ENCODE measurements at regions of chr12 and their contacts with region 1.

Region 1: DNA sequence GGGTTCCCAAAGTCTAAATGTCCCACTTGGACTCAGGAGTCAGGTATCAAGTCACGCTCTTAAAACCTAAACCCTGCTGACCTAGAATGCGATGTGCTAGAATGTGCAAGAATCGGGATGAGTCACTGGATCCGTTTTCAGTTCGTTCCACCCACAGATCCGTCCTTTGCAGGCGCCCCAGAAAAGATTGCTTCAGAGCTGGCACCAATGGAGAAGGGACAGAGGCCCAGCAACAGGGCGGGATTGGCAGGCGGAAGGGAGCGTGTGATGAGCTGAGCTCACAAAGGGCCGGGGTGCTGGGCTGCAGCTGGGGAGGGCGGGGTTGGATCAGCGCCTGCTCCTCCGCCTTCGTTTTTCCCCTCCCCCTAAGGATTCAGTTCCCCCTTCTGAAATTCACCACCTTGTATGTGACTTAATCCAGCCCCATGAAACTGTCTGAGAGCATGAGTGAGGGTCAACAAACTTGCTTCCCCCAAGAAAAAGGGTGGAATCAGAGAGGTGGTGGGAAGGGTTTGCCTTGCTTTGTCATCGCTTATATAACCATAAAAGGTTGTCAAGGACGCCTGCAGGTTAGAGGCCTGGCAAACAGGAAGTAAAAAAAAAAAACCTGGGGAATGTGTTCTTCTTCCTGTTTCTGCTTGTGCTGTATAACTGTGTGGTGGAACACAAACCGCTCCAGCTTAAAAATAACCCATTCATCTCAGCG is 2.8 kb upstream of the UBC start:
- DNase-seq: peak; percentile 99
- H3K4me3 ChIP-seq: peak overlapping the region; percentile 22; the same call in 1 of the 2 replicates
- H3K27me3 ChIP-seq: no peaks in the 10 kb centered on the region
- CTCF ChIP-seq: no peak

Region 2: GRCh38 chr12:124829008-124829707 is 88.1 kb before region 1 on chr12:
- CTCF ChIA-PET with region 1: no interaction called
- POLR2A ChIA-PET with region 1: interaction called, 10 read pairs
- DNase-seq: peak; percentile 73
- H3K4me3 ChIP-seq: no peak overlapping the region
- H3K27me3 ChIP-seq: no peaks in the 10 kb centered on the region
- CTCF ChIP-seq: no peak

Measured in BJ (cell line).